ENCODE measurements at regions of chr2 and their contacts with region 1.

Region 1: DNA sequence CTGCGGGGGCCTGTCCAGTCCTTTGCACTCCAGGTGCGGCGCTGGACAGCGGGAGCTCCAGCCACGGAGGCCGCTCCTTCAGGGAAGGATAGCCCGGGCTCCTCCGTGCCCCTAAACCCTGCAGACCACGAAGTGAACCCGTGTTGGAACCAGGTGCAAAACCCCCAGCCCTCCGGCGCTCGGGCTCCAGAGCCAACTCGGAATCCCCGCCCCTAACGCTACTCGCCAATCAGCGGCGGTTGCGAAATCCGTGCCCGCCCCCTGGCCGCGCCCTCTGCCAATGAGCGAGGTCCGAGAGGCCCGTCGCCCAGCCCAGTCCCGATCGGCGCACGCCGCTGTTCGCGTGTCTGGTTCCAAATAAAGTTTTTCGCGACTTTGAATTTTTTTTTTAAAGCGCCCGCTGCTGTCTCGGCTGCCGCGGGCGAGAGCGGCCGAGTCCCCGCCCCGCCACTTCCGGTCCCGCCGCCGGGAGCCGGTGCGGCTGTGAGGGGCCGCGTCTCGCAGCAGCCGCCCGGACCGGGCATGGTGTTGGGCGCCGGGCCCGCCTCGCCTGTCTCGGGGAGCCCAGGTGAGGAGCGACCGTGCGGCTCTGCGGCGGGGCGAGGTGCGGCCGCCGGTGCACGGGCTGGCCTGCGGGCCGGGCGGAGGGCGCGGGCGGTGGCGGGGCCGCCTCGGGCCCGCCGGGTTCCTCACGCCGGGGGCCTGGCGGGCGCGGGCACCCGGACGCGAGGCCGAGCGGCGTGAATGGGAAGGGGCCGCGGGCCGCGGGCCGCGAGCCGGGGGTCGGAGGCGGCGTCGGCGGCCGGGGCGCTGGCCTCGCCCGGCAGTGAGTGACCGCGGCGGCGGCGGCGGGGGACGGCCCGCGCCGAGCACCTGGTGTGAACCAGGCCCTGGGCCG is at the start of gene UBE2F:
- DNase-seq: peak; percentile 97 to 98
- ATAC-seq: peak; percentile 93 to 98 (median 93)
- H3K4me3 ChIP-seq: peak within 1 kb of the TSS; percentile 81
- H3K4me3 Mint-ChIP-seq: peak within 1 kb of the TSS; percentile 92
- H3K27ac ChIP-seq: peak within 1 kb of the TSS; percentile 47
- H3K27ac Mint-ChIP-seq: peak within 1 kb of the TSS; percentile 86 to 90
- H3K4me1 ChIP-seq: peaks cover 43% of the 10 kb centered on the region
- H3K4me1 Mint-ChIP-seq: peaks cover 49 to 51% of the 10 kb centered on the region in 2 donors
- H3K27me3 ChIP-seq: no peaks in the 10 kb centered on the region
- H3K27me3 Mint-ChIP-seq: no peaks in the 10 kb centered on the region
- CTCF ChIP-seq: no peak
- total RNA-seq, gene UBE2F: 82.4 to 135 (median 96.1) TPM

Region 2: GRCh38 chr2:237858294-237859081 is 108.3 kb before region 1 on chr2:
- intact Hi-C with region 1: loop called (anchors 2 kb)
- DNase-seq: peak; percentile 54 to 69
- ATAC-seq: peak; percentile 80 to 94 (median 86)
- H3K4me3 ChIP-seq: peak overlapping the region; percentile 17
- H3K4me3 Mint-ChIP-seq: peak overlapping the region; percentile 93
- H3K27ac ChIP-seq: no peak overlapping the region
- H3K27ac Mint-ChIP-seq: peak overlapping the region; percentile 62 to 84
- H3K4me1 ChIP-seq: peaks cover 24% of the 10 kb centered on the region
- H3K4me1 Mint-ChIP-seq: peaks cover 14 to 18% of the 10 kb centered on the region in 2 donors
- H3K27me3 ChIP-seq: no peaks in the 10 kb centered on the region
- H3K27me3 Mint-ChIP-seq: peaks cover 12 to 14% of the 10 kb centered on the region in 2 donors
- CTCF ChIP-seq: peak; percentile 75

Region 3: DNA sequence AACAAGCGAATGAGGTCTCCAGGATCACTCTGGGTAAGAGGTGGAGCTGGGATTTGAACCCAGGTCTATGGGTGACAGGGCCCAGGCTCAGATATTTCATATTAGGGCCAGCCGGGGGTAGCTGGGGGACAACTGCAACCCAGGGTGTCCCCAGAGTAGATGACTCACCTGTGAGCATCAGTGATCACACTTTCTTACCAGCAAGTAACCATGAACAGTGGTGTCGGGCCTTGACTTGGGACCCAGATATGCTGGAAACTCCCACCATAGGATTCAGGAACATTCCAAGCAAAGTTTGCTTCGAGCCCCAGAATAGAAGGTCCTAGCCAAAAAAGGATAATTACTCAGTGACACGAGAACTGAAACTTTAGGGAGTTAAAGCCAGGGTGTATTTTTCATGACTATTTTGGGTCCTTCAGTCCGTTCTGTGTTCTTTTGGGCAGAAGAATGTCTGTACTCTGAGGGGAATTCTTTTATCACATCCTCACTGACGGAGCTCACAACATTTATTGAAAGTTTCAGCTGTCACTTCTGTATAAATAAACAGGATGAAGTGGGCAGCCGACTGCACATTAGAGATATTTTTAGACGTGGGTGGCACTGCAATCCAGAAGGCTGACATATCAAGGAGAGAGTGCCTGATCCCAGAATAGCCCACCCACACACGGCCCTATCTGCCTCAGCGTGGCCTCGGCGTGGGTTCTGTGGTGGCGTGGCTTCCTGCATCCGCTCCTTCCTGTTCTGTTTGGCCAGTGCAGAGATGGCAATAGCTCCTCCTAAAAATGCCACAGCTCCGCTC is 61.8 kb before region 1 on chr2:
- intact Hi-C with region 1: loop called (anchors 1 kb)
- DNase-seq: no peak
- ATAC-seq: peak; percentile 28 to 51 (median 46)
- H3K4me3 ChIP-seq: no peak overlapping the region
- H3K4me3 Mint-ChIP-seq: peak overlapping the region; percentile 76
- H3K27ac ChIP-seq: peak overlapping the region; percentile 71
- H3K27ac Mint-ChIP-seq: peak overlapping the region; percentile 95 to 98
- H3K4me1 ChIP-seq: peaks cover 59% of the 10 kb centered on the region
- H3K4me1 Mint-ChIP-seq: peaks cover 51 to 53% of the 10 kb centered on the region in 2 donors
- H3K27me3 ChIP-seq: no peaks in the 10 kb centered on the region
- H3K27me3 Mint-ChIP-seq: no peaks in the 10 kb centered on the region
- CTCF ChIP-seq: no peak

Region 4: GRCh38 chr2:237943395-237944094 is 23.3 kb before region 1 on chr2:
- intact Hi-C with region 1: no loop called
- DNase-seq: no peak
- ATAC-seq: no peak
- H3K4me3 ChIP-seq: no peak overlapping the region
- H3K4me3 Mint-ChIP-seq: peak overlapping the region; percentile 77
- H3K27ac ChIP-seq: peak overlapping the region; percentile 85
- H3K27ac Mint-ChIP-seq: peak overlapping the region; percentile 92 to 93
- H3K4me1 ChIP-seq: peaks cover 67% of the 10 kb centered on the region
- H3K4me1 Mint-ChIP-seq: peaks cover 87 to 89% of the 10 kb centered on the region in 2 donors
- H3K27me3 ChIP-seq: no peaks in the 10 kb centered on the region
- H3K27me3 Mint-ChIP-seq: no peaks in the 10 kb centered on the region
- CTCF ChIP-seq: no peak

Region 5: DNA sequence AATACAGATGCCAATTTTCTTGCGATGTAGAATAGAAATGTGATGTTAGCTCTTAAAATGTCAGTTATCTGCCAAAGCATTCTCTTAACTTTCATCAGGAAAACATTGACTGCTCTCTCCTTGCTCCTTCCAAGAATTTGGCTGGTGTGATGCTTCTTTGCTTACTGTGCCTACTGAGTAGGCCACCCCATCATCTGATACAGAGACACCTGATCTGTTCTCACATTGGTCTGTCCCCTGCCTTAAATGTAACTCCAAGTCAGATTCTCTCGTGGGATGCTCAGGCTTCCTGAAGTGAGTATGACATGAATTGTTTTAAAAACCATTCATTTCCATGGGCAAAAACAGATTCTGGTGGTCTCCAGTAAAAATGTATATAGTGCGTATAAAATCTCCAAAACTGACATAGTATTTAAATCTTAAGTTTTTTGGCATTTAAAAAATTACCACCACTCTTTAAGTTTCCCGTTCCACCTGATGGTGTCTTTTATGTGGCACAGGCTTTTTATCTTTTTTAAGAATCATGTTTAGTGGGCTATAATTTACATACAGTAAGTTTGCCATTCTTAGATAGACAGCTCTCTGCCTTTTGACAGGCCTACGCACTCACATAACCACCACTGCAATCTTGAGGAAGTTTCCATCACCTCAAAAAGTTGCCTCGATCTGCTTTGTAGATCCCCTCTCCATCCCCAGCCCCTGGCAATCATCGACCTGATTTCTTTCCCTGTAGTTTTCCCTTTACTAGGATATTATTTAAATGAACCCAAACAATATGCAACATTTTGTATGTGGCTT is 36.6 kb after region 1 on chr2:
- intact Hi-C with region 1: loop called (anchors 5 kb)
- DNase-seq: peak in 1 of 2 donors; percentile 40
- ATAC-seq: peak; percentile 39 to 49 (median 48)
- H3K4me3 ChIP-seq: no peak overlapping the region
- H3K4me3 Mint-ChIP-seq: peak overlapping the region; percentile 56
- H3K27ac ChIP-seq: peak overlapping the region; percentile 27
- H3K27ac Mint-ChIP-seq: peak overlapping the region; percentile 75 to 90
- H3K4me1 ChIP-seq: peaks cover 23% of the 10 kb centered on the region
- H3K4me1 Mint-ChIP-seq: peaks cover 56 to 62% of the 10 kb centered on the region in 2 donors
- H3K27me3 ChIP-seq: no peaks in the 10 kb centered on the region
- H3K27me3 Mint-ChIP-seq: no peaks in the 10 kb centered on the region
- CTCF ChIP-seq: no peak

Region 6: GRCh38 chr2:238060542-238061314 is 93.9 kb after region 1 on chr2 and contains the start of gene SCLY:
- intact Hi-C with region 1: loop called (anchors 2 kb)
- DNase-seq: peak; percentile 90 to 99
- ATAC-seq: peak; percentile 95 to 99 (median 96)
- H3K4me3 ChIP-seq: peak within 1 kb of the TSS; percentile 86
- H3K4me3 Mint-ChIP-seq: peak within 1 kb of the TSS; percentile 89
- H3K27ac ChIP-seq: peak within 1 kb of the TSS; percentile 66
- H3K27ac Mint-ChIP-seq: peak within 1 kb of the TSS; percentile 84 to 93
- H3K4me1 ChIP-seq: peaks cover 16% of the 10 kb centered on the region
- H3K4me1 Mint-ChIP-seq: peaks cover 30 to 32% of the 10 kb centered on the region in 2 donors
- H3K27me3 ChIP-seq: no peaks in the 10 kb centered on the region
- H3K27me3 Mint-ChIP-seq: peaks cover 0 to 10% of the 10 kb centered on the region in 2 donors
- CTCF ChIP-seq: no peak
- total RNA-seq, gene SCLY: 16.3 to 24.6 (median 20.1) TPM

Region 7: GRCh38 chr2:238288650-238289573 is 322.1 kb after region 1 on chr2:
- intact Hi-C with region 1: loop called (anchors 10 kb)
- DNase-seq: peak; percentile 98 to 99
- ATAC-seq: peak; percentile 73 to 91 (median 83)
- H3K4me3 ChIP-seq: peak overlapping the region; percentile 45
- H3K4me3 Mint-ChIP-seq: peak overlapping the region; percentile 99
- H3K27ac ChIP-seq: peak overlapping the region; percentile 86
- H3K27ac Mint-ChIP-seq: peak overlapping the region; percentile 98 to 99
- H3K4me1 ChIP-seq: peaks cover 35% of the 10 kb centered on the region
- H3K4me1 Mint-ChIP-seq: peaks cover 41 to 46% of the 10 kb centered on the region in 2 donors
- H3K27me3 ChIP-seq: no peaks in the 10 kb centered on the region
- H3K27me3 Mint-ChIP-seq: no peaks in the 10 kb centered on the region
- CTCF ChIP-seq: no peak

Measured in natural killer cell (primary cell).